ENCODE measurements at regions of chr12 and their contacts with region 1.

Region 1: GRCh38 chr12:6752921-6753771 is at the start of gene MLF2:
- DNase-seq: peak; percentile 99
- CTCF ChIP-seq: peak; percentile 96

Region 2: GRCh38 chr12:6500466-6500865 is 252.7 kb before region 1 on chr12:
- CTCF ChIA-PET with region 1: no interaction called
- POLR2A ChIA-PET with region 1: no interaction called
- DNase-seq: no peak
- CTCF ChIP-seq: no peak

Region 3: DNA sequence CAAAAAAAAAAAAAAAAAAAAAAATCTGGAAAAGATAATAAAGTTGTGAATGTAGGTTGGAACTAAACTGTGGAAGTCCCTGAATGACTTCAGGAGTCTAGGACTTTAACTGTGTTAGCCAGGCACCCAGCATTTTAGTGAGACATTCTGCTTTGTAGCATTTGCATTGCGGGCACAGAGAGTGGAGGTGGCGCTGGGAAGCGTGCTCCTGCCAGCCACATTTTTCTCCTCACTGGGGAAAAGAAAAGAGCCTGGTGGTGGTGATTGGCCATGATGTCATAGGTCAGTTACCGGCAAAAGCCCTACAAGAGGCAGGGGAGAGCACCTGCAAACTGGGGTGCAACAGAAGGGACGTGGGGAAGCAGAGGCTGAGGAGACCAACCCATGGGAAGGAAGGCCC is 228.5 kb before region 1 on chr12:
- CTCF ChIA-PET with region 1: no interaction called
- POLR2A ChIA-PET with region 1: no interaction called
- DNase-seq: no peak
- CTCF ChIP-seq: no peak

Region 4: GRCh38 chr12:6723607-6724396 is 29.3 kb before region 1 on chr12 and contains the start of gene COPS7A:
- CTCF ChIA-PET with region 1: interaction called, 41 read pairs
- POLR2A ChIA-PET with region 1: interaction called, 9 read pairs
- DNase-seq: peak; percentile 97
- CTCF ChIP-seq: peak; percentile 27

Region 5: DNA sequence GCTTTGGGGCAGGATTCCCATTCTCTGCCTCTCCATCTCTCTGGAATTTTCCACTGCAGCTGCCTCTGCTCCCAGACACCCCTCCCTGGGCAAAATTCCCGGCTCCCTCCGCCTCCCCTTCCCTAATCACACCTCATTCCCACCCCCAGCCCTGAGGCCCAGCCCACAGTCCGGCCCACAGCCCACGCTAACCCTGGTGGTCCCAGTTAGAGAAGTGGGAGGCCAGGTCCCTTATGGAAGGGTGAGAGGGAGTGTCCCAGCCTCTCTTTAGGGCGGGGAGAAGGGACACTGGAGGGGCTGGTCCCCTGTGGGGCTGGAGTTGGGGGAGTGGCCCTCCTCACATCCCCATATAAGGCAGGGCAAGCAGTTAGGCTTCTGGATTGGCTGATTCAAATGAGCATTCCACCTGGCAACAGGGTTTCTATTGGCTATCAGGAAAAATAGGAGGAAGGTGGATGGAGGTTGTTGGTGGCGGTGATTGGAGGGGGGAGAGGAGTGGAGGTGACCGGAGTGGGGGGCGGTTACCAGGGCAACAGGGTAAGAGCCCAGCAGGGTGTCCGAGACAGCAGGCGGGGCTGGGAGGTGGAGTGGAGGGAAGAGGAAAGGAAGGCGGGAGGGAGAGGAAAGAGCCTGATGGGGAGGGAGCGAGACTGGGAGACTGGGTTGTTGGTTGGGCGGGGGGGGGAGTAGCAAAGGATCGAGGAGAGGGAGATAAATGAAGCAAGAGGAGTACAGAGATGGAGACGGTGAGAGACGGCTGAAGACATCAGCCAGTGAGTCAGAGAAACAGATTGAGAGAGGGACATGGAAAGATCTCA is 11.1 kb after region 1 on chr12:
- CTCF ChIA-PET with region 1: interaction called, 80 read pairs
- POLR2A ChIA-PET with region 1: interaction called, 15 read pairs
- DNase-seq: peak; percentile 96
- CTCF ChIP-seq: no peak

Region 6: DNA sequence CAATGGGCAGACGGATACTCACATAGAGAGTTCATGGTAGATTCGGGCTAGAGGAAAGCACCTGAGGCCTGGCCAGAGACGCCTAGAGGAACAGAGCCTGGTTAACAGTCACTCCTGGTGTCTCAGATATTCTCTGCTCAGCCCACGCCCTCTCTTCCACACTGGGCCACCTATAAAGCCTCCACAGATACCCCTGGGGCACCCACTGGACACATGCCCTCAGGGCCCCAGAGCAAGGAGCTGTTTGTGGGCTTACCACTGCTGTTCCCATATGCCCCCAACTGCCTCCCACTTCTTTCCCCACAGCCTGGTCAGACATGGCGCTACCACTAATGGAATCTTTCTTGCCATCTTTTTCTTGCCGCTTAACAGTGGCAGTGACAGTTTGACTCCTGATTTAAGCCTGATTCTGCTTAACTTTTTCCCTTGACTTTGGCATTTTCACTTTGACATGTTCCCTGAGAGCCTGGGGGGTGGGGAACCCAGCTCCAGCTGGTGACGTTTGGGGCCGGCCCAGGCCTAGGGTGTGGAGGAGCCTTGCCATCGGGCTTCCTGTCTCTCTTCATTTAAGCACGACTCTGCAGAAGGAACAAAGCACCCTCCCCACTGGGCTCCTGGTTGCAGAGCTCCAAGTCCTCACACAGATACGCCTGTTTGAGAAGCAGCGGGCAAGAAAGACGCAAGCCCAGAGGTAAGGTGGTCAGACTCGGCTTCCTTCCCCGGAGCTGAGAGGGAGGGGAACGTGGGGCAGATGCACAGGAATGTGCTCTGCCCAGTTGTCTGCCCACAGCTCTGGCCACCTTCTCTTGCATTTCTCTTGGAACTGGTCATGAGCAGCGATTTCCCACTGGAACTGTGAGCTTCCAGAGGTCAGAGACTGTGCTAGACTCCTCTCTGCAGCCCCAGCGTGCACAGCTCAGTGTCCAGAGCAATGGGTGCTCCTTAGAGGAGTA is 36.1 kb after region 1 on chr12 and contains the start of gene CD4:
- CTCF ChIA-PET with region 1: interaction called, 26 read pairs
- POLR2A ChIA-PET with region 1: no interaction called
- DNase-seq: no peak
- CTCF ChIP-seq: no peak

Region 7: DNA sequence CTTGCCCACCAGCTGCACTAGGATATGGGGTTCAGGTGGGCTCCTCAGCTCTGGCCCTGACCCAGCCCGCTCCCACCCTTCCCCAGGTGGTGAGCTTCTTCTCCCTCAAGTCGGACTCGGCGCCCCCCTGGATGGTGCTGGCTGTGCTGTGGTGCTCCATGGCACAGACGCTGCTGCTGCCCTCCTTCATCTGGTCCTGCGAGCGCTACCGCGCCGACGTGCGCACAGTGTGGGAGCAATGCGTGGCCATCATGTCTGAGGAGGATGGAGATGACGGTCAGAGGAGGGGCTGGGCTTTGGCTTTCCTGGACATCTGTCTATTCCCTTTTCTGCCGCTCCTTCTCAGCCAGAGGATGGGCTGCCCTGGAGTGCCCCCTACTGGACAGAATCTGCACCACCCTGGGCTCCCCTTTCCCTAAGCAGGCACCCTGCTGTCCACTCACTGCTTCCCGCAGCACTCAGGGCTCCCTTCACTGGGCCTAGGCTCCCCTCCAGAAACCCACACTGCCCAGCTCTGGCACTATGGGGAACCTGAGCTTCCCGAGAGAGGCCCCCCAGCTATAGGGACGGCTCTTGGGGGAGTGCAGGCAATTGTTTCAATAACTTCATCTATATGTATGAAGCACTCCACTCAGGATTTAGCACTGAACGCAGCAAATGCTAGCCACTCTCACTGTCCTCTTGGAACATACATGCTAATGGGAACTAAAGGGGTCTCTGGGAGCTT is 72.4 kb after region 1 on chr12:
- CTCF ChIA-PET with region 1: interaction called, 60 read pairs
- POLR2A ChIA-PET with region 1: no interaction called
- DNase-seq: peak; percentile 92
- CTCF ChIP-seq: peak; percentile 93

Region 8: DNA sequence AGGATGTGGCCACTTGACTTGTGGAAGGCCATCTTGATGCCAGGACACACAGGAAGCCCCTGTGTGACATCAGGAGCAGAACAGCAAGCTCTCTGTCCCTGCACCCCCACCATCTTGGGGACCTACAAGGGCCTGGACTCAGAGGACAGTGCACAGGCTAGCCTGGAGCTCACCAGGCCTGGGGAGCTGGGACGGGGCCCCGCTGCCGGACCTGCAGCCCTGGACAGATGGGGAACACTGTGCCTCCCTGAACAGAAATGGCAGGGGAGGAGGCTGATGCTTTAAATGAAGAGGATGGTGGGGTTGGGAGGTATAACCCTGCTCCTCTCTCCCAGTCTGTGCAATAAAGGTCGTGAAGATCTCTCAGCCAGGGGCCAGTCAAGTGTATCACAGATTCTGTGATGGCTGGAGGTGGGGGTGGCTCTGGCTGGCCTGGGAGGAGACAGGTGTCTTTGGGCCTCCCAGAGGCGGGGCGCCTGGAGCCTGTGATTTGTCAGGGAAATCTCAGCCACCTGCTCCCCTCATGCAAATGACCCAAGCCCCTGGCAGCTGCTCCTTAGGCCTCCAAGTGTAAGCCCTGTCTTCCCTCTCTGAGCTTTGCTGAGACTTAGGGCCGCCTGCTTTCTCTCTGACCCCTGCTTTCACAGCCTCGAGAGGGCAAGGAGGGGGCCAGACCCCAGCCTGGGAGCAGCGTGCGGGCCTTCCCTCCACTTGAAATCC is 86.5 kb after region 1 on chr12:
- CTCF ChIA-PET with region 1: interaction called, 15 read pairs
- POLR2A ChIA-PET with region 1: no interaction called
- DNase-seq: peak; percentile 78
- CTCF ChIP-seq: no peak

Region 9: GRCh38 chr12:6867413-6868210 is 114.5 kb after region 1 on chr12 and contains the start of gene TPI1:
- CTCF ChIA-PET with region 1: interaction called, 16 read pairs
- POLR2A ChIA-PET with region 1: interaction called, 8 read pairs
- DNase-seq: peak; percentile 96
- CTCF ChIP-seq: no peak

Region 10: GRCh38 chr12:6965026-6965661 is 212.0 kb after region 1 on chr12:
- CTCF ChIA-PET with region 1: no interaction called
- POLR2A ChIA-PET with region 1: no interaction called
- DNase-seq: peak; percentile 84
- CTCF ChIP-seq: peak; percentile 98

Measured in GM10248 (cell line).